ENCODE measurements at regions of chr18 and their contacts with region 1.

Region 1: GRCh38 chr18:65942103-65942502 is 191.3 kb downstream of the CDH7 start:
- DNase-seq: no peak
- H3K4me3 ChIP-seq: no peak overlapping the region
- H3K27ac ChIP-seq: no peak overlapping the region
- H3K27me3 ChIP-seq: no peaks in the 10 kb centered on the region
- CTCF ChIP-seq: no peak

Region 2: DNA sequence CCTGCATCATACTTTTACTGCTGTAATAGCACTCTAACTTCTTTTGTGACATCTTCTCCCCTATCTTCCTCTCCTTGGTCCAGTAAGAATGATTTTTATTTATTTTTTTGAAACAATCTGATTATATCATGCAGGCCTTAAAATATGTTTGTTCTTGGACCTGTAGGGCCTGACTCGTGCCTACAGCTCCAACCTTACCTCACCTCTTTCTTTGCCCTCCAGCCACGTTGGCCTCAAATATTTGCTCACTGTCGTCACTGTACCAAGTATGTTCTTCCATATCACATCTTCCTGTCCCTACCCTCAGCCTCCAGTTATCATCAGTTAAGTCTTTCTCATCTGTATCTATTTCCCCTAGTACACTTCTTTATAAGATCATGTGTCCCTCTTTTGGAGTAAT is 65.8 kb before region 1 on chr18:
- intact Hi-C with region 1: loop called in 1 of 2 experiments (anchors 10 kb)
- DNase-seq: no peak
- H3K4me3 ChIP-seq: no peak overlapping the region
- H3K27ac ChIP-seq: no peak overlapping the region
- H3K27me3 ChIP-seq: no peaks in the 10 kb centered on the region
- CTCF ChIP-seq: no peak

Measured in dorsolateral prefrontal cortex (tissue), 120 donors.